ENCODE measurements at regions of chr14 and their contacts with region 1.

Region 1: GRCh38 chr14:68651652-68652367 is 141.1 kb downstream of the ZFP36L1 start:
- DNase-seq: peak; percentile 92
- H3K4me3 ChIP-seq: no peak overlapping the region
- H3K27ac ChIP-seq: peak overlapping the region; percentile 96
- H3K27me3 ChIP-seq: no peaks in the 10 kb centered on the region
- CTCF ChIP-seq: no peak

Region 2: GRCh38 chr14:68682166-68683103 is 30.6 kb after region 1 on chr14:
- CTCF ChIA-PET with region 1: no interaction called
- POLR2A ChIA-PET with region 1: interaction called, 11 read pairs
- DNase-seq: peak; percentile 81
- H3K4me3 ChIP-seq: no peak overlapping the region
- H3K27ac ChIP-seq: peak overlapping the region; percentile 59
- H3K27me3 ChIP-seq: no peaks in the 10 kb centered on the region
- CTCF ChIP-seq: no peak

Measured in AG04450 (cell line).